ENCODE measurements at regions of chrX and their contacts with region 1.

Region 1: GRCh38 chrX:52261463-52262194 is 76.9 kb downstream of the MAGED4 start:
- DNase-seq: peak; percentile 67 to 93 (median 85)
- ATAC-seq: peak; percentile 96
- H3K4me3 ChIP-seq: peak overlapping the region; percentile 78
- H3K4me3 Mint-ChIP-seq: peak overlapping the region; percentile 87 to 99 (median 96)
- H3K27ac ChIP-seq: peak overlapping the region; percentile 74
- H3K27ac Mint-ChIP-seq: peak overlapping the region; percentile 91 to 99 (median 98)
- H3K4me1 ChIP-seq: peaks cover 0 to 12% of the 10 kb centered on the region in 2 donors
- H3K4me1 Mint-ChIP-seq: peaks cover 5 to 24% (median 16%) of the 10 kb centered on the region in 7 donors
- H3K27me3 ChIP-seq: no peaks in the 10 kb centered on the region
- H3K27me3 Mint-ChIP-seq: peaks cover 10 to 17% (median 12%) of the 10 kb centered on the region in 5 donors

Region 2: DNA sequence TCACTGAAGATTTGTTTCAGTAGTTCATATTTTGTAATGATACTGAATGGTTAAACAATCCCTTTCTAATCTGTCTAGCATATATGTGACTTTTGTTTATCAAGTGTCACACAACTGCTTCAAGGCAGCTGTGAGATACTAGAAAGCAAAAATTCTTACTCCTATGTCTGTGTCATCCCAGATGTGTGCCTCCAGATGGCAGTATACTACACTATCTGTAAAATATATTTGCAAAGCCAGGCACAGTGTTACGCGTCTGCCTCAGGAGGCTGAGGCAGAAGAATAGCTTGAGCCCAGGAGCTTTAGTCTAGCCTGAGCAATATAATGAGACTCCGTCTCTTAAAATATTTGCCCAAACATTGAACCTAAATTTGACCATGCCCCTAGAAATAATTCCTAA is 925.0 kb before region 1 on chrX:
- CTCF ChIA-PET with region 1: no interaction called
- POLR2A ChIA-PET with region 1: no interaction called
- intact Hi-C with region 1: loop called in 1 of 2 experiments (anchors 10 kb)
- DNase-seq: peak in 7 of 9 donors; percentile 22 to 52 (median 40)
- ATAC-seq: peak; percentile 88
- H3K4me3 ChIP-seq: no peak overlapping the region
- H3K4me3 Mint-ChIP-seq: no peak overlapping the region
- H3K27ac ChIP-seq: no peak overlapping the region
- H3K27ac Mint-ChIP-seq: no peak overlapping the region
- H3K4me1 ChIP-seq: no peaks in the 10 kb centered on the region
- H3K4me1 Mint-ChIP-seq: peaks cover 0 to 11% (median 2%) of the 10 kb centered on the region in 7 donors
- H3K27me3 ChIP-seq: no peaks in the 10 kb centered on the region
- H3K27me3 Mint-ChIP-seq: peaks cover 0 to 8% (median 0%) of the 10 kb centered on the region in 5 donors

Region 3: GRCh38 chrX:51496501-51497291 is 764.9 kb before region 1 on chrX and contains the start of gene NUDT11:
- CTCF ChIA-PET with region 1: no interaction called
- POLR2A ChIA-PET with region 1: no interaction called
- intact Hi-C with region 1: loop called in 1 of 2 experiments (anchors 5 kb)
- DNase-seq: peak in 5 of 9 donors; percentile 4 to 69 (median 8)
- ATAC-seq: peak; percentile 64
- H3K4me3 ChIP-seq: peak within 1 kb of the TSS; percentile 30
- H3K4me3 Mint-ChIP-seq: peak within 1 kb of the TSS; percentile 71 to 88 (median 84)
- H3K27ac ChIP-seq: no peak within 1 kb of the TSS
- H3K27ac Mint-ChIP-seq: peak within 1 kb of the TSS in 2 of 9 donors; percentile 74 to 80
- H3K4me1 ChIP-seq: no peaks in the 10 kb centered on the region
- H3K4me1 Mint-ChIP-seq: peaks cover 0 to 11% (median 6%) of the 10 kb centered on the region in 7 donors
- H3K27me3 ChIP-seq: peaks cover 0 to 4% of the 10 kb centered on the region in 2 donors
- H3K27me3 Mint-ChIP-seq: peaks cover 16 to 25% (median 24%) of the 10 kb centered on the region in 5 donors
- total RNA-seq, gene NUDT11: 0.13 to 1.2 (median 0.47) TPM in 4 of 5 experiments, not detected in the other

Region 4: DNA sequence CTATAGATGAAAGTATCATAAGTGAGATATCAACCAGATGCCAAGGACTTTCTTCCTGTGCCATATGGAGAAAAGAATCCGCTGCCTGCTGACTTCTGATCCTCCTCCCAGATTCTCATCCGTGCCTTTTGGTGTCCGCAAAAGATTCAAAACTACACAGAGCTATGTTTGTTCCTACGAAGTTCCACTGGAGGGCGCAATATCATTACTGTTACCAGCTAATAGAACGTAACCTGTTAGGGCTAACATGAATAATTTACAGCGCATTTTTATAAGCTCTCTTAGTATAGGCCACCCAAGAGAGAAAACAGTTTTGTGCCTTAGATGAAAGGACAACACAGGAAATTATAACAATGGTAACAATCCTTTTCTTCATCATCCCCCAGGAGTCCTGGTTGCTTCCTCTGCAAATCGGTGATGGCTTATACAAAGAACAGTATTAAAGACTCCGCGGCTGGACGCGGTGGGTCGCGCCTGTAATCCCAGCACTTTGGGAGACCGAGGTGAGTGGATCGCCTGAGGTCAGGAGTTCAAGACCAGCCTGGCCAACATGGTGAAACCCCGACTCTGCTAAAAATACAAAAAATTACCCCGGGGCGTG is 620.1 kb before region 1 on chrX:
- CTCF ChIA-PET with region 1: no interaction called
- POLR2A ChIA-PET with region 1: no interaction called
- intact Hi-C with region 1: loop called (anchors 1 to 2 kb)
- DNase-seq: peak in 5 of 9 donors; percentile 0 to 23 (median 9)
- ATAC-seq: no peak
- H3K4me3 ChIP-seq: no peak overlapping the region
- H3K4me3 Mint-ChIP-seq: no peak overlapping the region
- H3K27ac ChIP-seq: no peak overlapping the region
- H3K27ac Mint-ChIP-seq: no peak overlapping the region
- H3K4me1 ChIP-seq: no peaks in the 10 kb centered on the region
- H3K4me1 Mint-ChIP-seq: peaks cover 0 to 4% (median 0%) of the 10 kb centered on the region in 7 donors
- H3K27me3 ChIP-seq: no peaks in the 10 kb centered on the region
- H3K27me3 Mint-ChIP-seq: peaks cover 7 to 35% (median 18%) of the 10 kb centered on the region in 5 donors

Region 5: GRCh38 chrX:51892921-51893745 is 368.5 kb before region 1 on chrX and contains the start of gene MAGED1:
- CTCF ChIA-PET with region 1: no interaction called
- POLR2A ChIA-PET with region 1: no interaction called
- intact Hi-C with region 1: loop called (anchors 2 kb)
- DNase-seq: peak; percentile 25 to 80 (median 73)
- ATAC-seq: peak; percentile 93
- H3K4me3 ChIP-seq: peak within 1 kb of the TSS; percentile 50
- H3K4me3 Mint-ChIP-seq: peak within 1 kb of the TSS; percentile 88 to 98 (median 94)
- H3K27ac ChIP-seq: peak within 1 kb of the TSS; percentile 67
- H3K27ac Mint-ChIP-seq: peak within 1 kb of the TSS; percentile 85 to 95 (median 93)
- H3K4me1 ChIP-seq: peaks cover 0 to 3% of the 10 kb centered on the region in 2 donors
- H3K4me1 Mint-ChIP-seq: peaks cover 6 to 26% (median 19%) of the 10 kb centered on the region in 7 donors
- H3K27me3 ChIP-seq: no peaks in the 10 kb centered on the region
- H3K27me3 Mint-ChIP-seq: peaks cover 0 to 2% (median 0%) of the 10 kb centered on the region in 5 donors
- total RNA-seq, gene MAGED1: 26.3 to 41.9 (median 29.5) TPM

Region 6: GRCh38 chrX:51955200-51955599 is 306.4 kb before region 1 on chrX:
- CTCF ChIA-PET with region 1: no interaction called
- POLR2A ChIA-PET with region 1: no interaction called
- intact Hi-C with region 1: no loop called
- DNase-seq: no peak
- ATAC-seq: no peak
- H3K4me3 ChIP-seq: no peak overlapping the region
- H3K4me3 Mint-ChIP-seq: no peak overlapping the region
- H3K27ac ChIP-seq: no peak overlapping the region
- H3K27ac Mint-ChIP-seq: no peak overlapping the region
- H3K4me1 ChIP-seq: no peaks in the 10 kb centered on the region
- H3K4me1 Mint-ChIP-seq: no peaks in the 10 kb centered on the region
- H3K27me3 ChIP-seq: no peaks in the 10 kb centered on the region
- H3K27me3 Mint-ChIP-seq: peaks cover 3 to 12% (median 11%) of the 10 kb centered on the region in 5 donors

Region 7: DNA sequence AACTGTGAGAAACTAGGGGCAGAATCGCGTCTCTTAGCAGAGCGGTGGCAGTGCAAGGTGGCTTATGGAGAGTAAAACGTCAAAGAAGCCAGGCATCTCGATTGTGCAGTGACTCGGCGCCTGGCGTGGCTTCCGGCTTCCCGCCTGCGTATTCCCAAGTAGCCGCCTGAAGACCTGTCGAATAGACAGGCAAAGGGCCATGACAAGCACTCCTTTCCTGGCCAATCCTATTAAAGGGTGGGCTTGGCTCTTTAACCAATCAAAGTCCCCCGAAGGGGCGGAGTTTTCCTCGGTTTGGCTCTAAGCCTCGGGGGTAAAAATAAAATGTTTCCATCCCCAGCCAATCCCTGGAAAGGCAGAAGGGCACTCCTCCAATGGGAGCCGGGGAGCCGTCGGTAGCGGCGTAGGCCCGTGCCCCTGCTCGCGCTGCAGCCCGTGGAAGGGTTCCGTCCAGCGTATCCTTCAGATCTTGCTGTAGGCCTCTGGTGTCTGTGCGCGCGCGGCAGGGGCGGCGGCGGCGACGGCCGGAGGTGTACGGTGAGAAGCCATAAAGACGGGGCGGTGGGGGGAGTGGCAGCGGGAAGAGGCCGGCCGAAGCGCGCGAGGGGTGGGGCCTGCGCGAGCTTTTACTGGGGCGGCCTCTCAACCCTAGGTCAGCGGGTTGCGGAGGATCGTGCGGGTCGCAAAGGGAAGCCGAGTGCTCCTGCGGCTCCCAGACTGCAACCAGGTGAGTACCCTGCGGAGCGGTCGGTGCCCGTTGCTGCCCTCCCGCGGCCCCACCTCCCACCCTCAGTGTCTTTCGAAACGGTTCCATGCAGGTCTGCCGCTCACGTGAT is 832.3 kb after region 1 on chrX and contains the start of gene KANTR:
- CTCF ChIA-PET with region 1: no interaction called
- POLR2A ChIA-PET with region 1: no interaction called
- intact Hi-C with region 1: loop called in 1 of 2 experiments (anchors 10 kb)
- DNase-seq: peak; percentile 47 to 88 (median 83)
- ATAC-seq: peak; percentile 88
- H3K4me3 ChIP-seq: peak within 1 kb of the TSS; percentile 93
- H3K4me3 Mint-ChIP-seq: peak within 1 kb of the TSS; percentile 82 to 93 (median 88)
- H3K27ac ChIP-seq: peak within 1 kb of the TSS; percentile 73
- H3K27ac Mint-ChIP-seq: peak within 1 kb of the TSS; percentile 80 to 94 (median 91)
- H3K4me1 ChIP-seq: no peaks in the 10 kb centered on the region
- H3K4me1 Mint-ChIP-seq: peaks cover 9 to 27% (median 20%) of the 10 kb centered on the region in 7 donors
- H3K27me3 ChIP-seq: no peaks in the 10 kb centered on the region
- H3K27me3 Mint-ChIP-seq: no peaks in the 10 kb centered on the region
- total RNA-seq, gene KANTR: 12.5 to 29.9 (median 16.9) TPM